AG04450 (cell line): ENCODE measurements at regions of chr14 and their contacts with region 1.

Region 1: DNA sequence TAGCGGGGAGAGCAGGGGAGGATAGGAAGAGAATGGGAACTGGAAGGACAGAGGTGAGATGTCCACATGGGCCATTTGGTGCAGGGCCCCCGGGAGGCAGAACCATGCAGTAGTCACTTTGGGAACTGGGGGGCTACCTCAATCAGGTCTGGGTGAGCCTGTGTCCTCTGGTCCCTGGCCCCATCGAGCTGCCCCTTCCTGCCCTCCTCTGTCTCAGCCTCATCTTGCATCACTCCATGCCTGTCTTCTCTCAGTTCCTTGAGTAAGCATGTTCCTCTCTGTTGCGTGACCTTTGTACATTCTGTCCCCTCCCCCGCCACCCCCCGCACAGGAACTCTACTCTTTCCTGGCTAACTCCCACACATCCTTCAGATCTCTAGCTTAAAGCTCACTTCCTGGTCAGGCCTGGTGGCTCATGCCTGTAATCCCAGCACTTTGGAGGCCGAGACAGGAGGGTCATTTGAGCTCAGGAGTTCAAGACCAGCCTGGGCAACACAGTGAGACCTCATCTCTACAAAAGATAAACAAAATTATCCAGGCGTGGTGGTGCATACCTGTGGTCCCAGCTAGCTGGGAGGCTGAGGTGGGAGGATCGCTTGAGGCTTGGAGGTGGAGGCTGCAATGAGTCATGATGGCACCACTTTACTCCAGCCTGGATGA is 23.2 kb downstream of the FOS start:
- DNase-seq: no peak
- H3K4me3 ChIP-seq: no peak overlapping the region
- H3K27ac ChIP-seq: no peak overlapping the region
- H3K27me3 ChIP-seq: no peaks in the 10 kb centered on the region
- CTCF ChIP-seq: no peak

Region 2: GRCh38 chr14:73613419-73613963 is 1688.3 kb before region 1 on chr14:
- CTCF ChIA-PET with region 1: no interaction called
- POLR2A ChIA-PET with region 1: no interaction called
- DNase-seq: no peak
- H3K4me3 ChIP-seq: no peak overlapping the region
- H3K27ac ChIP-seq: no peak overlapping the region
- H3K27me3 ChIP-seq: no peaks in the 10 kb centered on the region
- CTCF ChIP-seq: no peak

Region 3: DNA sequence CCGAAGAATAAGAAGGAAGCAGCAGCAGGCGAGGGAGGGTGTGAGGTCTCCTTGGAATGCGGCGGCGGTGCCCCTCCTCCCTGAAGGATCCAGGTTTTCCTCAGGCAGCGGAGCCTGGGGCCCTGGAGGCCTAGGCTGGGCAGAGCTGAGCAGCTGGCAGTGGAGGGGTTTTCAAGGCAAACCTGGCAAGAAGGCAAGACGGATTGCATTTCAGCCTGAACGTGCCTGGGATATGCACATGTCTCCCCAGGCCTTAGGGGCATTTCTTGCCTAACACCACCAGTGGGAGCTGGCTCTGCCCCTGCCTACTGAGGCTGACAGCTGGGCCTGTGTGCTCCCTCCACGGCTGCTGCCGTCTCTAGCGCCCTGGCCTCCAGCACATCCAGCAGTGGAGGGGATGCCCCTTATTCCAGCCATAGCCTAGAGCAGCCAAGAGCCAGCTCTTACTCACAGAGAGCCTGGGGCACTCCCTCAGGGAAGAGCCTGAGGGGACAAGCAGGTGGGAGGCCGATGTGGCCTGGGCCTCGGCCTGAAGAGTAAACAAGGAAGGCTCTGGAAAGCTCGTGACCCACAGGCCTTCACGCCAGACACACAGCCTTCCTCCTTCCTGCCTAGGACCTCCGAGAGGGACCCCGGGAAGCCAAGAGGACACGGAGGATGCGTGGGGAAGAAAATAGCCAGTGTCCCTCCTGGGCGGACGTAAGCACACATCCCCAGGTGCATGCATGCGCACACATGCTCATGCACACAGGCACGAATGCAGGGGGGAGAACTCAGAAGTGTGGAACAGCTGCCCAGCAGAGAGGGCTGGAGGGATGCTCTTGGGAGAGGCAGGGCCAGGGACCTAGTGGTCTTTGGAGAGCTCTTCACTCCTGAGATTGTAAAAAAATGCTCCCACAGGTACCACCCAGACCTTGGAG is 322.1 kb before region 1 on chr14:
- CTCF ChIA-PET with region 1: no interaction called
- POLR2A ChIA-PET with region 1: no interaction called
- DNase-seq: no peak
- H3K4me3 ChIP-seq: no peak overlapping the region
- H3K27ac ChIP-seq: peak overlapping the region; percentile 21
- H3K27me3 ChIP-seq: peaks cover 2% of the 10 kb centered on the region
- CTCF ChIP-seq: 0 out of 2 replicates have a peak, but pooled peaks have one; percentile 12

Region 4: DNA sequence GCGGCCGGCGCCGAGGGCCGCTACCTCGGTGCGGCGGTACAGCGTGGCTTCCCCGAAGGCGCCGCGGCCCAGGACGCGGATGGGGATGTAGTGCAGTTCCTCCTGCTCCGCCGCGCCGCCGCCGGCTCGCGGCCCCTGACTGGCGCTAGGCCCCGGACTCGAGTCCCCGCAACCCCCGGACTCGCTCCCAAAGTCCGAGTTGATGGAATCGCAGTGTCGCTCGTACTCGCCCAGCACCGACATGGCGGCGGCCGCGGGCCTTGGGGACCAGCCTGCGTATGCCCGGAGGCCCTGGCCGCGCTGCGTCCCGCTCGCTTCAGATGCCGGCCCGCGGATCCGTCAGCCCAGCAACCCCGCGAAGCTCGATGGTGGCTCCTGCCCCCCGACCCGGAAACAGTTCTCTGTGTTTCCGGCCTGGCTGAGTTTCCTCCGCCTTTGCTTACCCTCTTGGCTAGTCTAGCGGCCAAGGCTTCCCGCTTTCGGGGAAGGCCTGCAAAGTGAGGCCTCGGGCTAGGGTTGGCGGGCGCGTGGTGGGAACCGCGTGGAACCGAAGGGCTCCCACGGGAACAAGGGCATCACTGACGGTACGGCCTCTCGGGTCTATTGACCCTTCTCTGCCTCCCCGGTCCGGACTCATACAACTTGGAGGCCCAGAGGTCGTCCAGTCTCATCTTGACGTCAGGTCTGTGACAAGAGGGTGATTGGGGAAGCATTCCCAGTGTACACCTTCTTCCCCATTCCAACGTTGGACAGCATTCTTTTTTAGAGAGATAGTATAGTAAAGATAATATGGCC is 174.9 kb before region 1 on chr14 and contains the start of gene NEK9:
- CTCF ChIA-PET with region 1: interaction called, 90 read pairs
- POLR2A ChIA-PET with region 1: interaction called, 5 read pairs
- DNase-seq: no peak
- H3K4me3 ChIP-seq: peak within 1 kb of the TSS; percentile 72
- H3K27ac ChIP-seq: peak within 1 kb of the TSS; percentile 66
- H3K27me3 ChIP-seq: no peaks in the 10 kb centered on the region
- CTCF ChIP-seq: no peak
- polyA plus RNA-seq, gene NEK9: 72.4 and 82.3 TPM in 2 replicates

Region 5: GRCh38 chr14:75144944-75145343 is 156.9 kb before region 1 on chr14:
- CTCF ChIA-PET with region 1: interaction called, 10 read pairs
- POLR2A ChIA-PET with region 1: no interaction called
- DNase-seq: no peak
- H3K4me3 ChIP-seq: no peak overlapping the region
- H3K27ac ChIP-seq: no peak overlapping the region
- H3K27me3 ChIP-seq: no peaks in the 10 kb centered on the region
- CTCF ChIP-seq: no peak

Region 6: GRCh38 chr14:75249251-75249957 is 52.4 kb before region 1 on chr14:
- CTCF ChIA-PET with region 1: no interaction called
- POLR2A ChIA-PET with region 1: no interaction called
- DNase-seq: no peak
- H3K4me3 ChIP-seq: no peak overlapping the region
- H3K27ac ChIP-seq: no peak overlapping the region
- H3K27me3 ChIP-seq: peaks cover 9% of the 10 kb centered on the region
- CTCF ChIP-seq: no peak

Region 7: GRCh38 chr14:75459099-75459741 is 157.4 kb after region 1 on chr14:
- CTCF ChIA-PET with region 1: no interaction called
- POLR2A ChIA-PET with region 1: no interaction called
- DNase-seq: no peak
- H3K4me3 ChIP-seq: no peak overlapping the region
- H3K27ac ChIP-seq: no peak overlapping the region
- H3K27me3 ChIP-seq: no peaks in the 10 kb centered on the region
- CTCF ChIP-seq: no peak